Natural killer cell (primary cell): ENCODE measurements at regions of chr17 and their contacts with region 1.

Region 1: DNA sequence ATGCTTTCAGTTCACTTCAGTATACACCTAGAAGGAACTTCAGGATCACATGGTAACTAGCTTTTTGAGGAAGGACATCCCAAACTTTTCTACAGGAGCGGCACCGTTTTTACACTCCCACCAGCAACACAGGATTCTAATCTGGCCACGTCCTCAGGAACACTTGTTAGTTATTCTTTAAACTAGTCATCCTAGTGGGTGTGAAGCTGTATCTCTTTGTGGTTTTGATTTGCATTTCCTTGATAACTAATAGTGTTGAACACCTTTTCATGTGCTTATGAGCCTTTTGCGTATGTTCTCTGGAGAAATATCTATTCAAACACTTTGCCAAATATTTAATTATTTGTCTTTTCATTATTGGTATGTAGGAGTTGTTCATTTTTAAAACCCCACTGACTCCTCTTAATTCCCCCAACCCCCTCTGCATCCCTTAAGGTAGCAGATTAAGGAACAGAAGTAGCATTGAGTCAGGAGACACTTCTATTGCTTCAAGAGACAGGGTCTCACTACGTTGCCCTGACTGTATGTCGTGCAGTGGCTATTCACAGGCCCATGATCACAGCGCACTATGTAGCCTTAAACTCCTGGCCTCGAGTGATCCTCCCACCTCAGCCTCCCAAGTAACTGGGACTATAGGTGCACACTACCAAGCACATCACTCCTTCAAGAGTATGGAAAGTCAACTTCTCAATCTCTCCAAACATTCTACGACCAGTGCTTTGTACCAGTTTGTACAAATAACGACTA is 25.4 kb downstream of the YWHAE start:
- DNase-seq: peak in 1 of 2 donors; percentile 53
- ATAC-seq: peak; percentile 66 to 74 (median 69)
- H3K4me3 ChIP-seq: no peak overlapping the region
- H3K4me3 Mint-ChIP-seq: peak overlapping the region; percentile 17
- H3K27ac ChIP-seq: no peak overlapping the region
- H3K27ac Mint-ChIP-seq: peak overlapping the region; percentile 47 to 80
- H3K4me1 ChIP-seq: peaks cover 63% of the 10 kb centered on the region
- H3K4me1 Mint-ChIP-seq: peaks cover 74% of the 10 kb centered on the region in 2 donors
- H3K27me3 ChIP-seq: no peaks in the 10 kb centered on the region
- H3K27me3 Mint-ChIP-seq: no peaks in the 10 kb centered on the region
- CTCF ChIP-seq: no peak

Region 2: GRCh38 chr17:1294157-1294717 is 80.4 kb before region 1 on chr17:
- intact Hi-C with region 1: no loop called
- DNase-seq: peak; percentile 83 to 95
- ATAC-seq: peak; percentile 94 to 99 (median 94)
- H3K4me3 ChIP-seq: no peak overlapping the region
- H3K4me3 Mint-ChIP-seq: peak overlapping the region; percentile 88
- H3K27ac ChIP-seq: peak overlapping the region; percentile 72
- H3K27ac Mint-ChIP-seq: peak overlapping the region; percentile 95 to 97
- H3K4me1 ChIP-seq: peaks cover 71% of the 10 kb centered on the region
- H3K4me1 Mint-ChIP-seq: peaks cover 56 to 75% of the 10 kb centered on the region in 2 donors
- H3K27me3 ChIP-seq: peaks cover 10% of the 10 kb centered on the region
- H3K27me3 Mint-ChIP-seq: peaks cover 0 to 6% of the 10 kb centered on the region in 2 donors
- CTCF ChIP-seq: no peak

Region 3: DNA sequence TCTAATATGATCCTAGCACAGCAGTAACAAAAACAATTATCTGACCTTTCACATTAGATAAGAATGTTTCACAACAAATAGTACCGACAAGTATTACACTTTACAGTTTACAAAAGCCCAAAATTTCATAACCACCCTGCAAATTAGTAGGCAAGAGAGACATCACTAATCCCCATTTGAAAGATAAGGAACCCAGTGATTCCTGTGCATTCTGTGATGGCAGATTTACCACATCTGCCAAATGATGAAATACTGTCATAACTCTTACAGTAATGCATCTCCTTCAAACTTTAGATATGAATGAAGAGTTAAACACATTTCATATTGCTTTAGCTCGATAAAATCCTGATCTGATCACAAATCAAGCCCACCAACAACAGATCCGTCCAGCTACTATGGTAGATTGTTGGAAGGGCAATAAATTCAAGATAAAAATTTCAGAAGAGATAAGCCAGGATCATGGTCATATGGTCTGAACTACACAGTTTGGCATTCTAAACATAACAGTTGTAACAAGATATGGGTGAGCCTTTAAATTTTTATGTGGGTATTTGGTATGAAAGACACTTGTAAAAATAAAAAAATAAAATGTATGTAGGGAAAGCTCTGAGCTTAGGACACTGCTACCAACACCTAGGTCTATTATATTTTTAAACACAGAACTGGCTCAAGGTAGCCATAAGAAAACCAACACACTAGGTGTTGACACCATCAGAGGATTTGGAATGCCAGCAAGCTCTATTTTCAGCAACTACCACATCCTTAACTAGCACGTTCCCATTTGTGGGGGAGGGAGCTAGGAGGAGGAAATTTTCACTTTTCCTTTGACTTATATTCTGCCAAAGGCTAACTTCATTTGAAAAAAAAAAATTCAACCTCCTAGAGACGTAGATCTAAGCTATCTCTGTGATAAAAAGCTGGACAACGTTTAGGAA is 16.1 kb after region 1 on chr17:
- intact Hi-C with region 1: loop called (anchors 2 kb)
- DNase-seq: peak in 1 of 2 donors; percentile 5
- ATAC-seq: peak in 1 of 3 donors; percentile 65
- H3K4me3 ChIP-seq: no peak overlapping the region
- H3K4me3 Mint-ChIP-seq: peak overlapping the region; percentile 64
- H3K27ac ChIP-seq: no peak overlapping the region
- H3K27ac Mint-ChIP-seq: peak overlapping the region; percentile 74 to 83
- H3K4me1 ChIP-seq: peaks cover 54% of the 10 kb centered on the region
- H3K4me1 Mint-ChIP-seq: peaks cover 54 to 82% of the 10 kb centered on the region in 2 donors
- H3K27me3 ChIP-seq: no peaks in the 10 kb centered on the region
- H3K27me3 Mint-ChIP-seq: no peaks in the 10 kb centered on the region
- CTCF ChIP-seq: no peak